Esophagus muscularis mucosa (tissue), 4 donors: ENCODE measurements at regions of chr20 and their contacts with region 1.

Region 1: GRCh38 chr20:44210422-44211176 is at the start of gene OSER1:
- DNase-seq: peak; percentile 100
- H3K4me3 ChIP-seq: peak within 1 kb of the TSS; percentile 81 to 94 (median 92)
- H3K27ac ChIP-seq: peak within 1 kb of the TSS; percentile 96 to 99 (median 98)
- H3K4me1 ChIP-seq: peaks cover 51 to 71% (median 57%) of the 10 kb centered on the region in 4 donors
- H3K27me3 ChIP-seq: no peaks in the 10 kb centered on the region
- CTCF ChIP-seq: peak in 1 of 3 experiments; percentile 16
- EP300 ChIP-seq: no peak
- POLR2A ChIP-seq: peak; percentile 93
- total RNA-seq, gene OSER1: 45.2 to 94.4 (median 71.0) TPM

Region 2: GRCh38 chr20:44056010-44056698 is 154.4 kb before region 1 on chr20:
- intact Hi-C with region 1: no loop called
- DNase-seq: peak; percentile 91
- H3K4me3 ChIP-seq: no peak overlapping the region
- H3K27ac ChIP-seq: no peak overlapping the region
- H3K4me1 ChIP-seq: no peaks in the 10 kb centered on the region
- H3K27me3 ChIP-seq: no peaks in the 10 kb centered on the region
- CTCF ChIP-seq: peak in 2 of 3 experiments; percentile 15 to 25
- EP300 ChIP-seq: no peak
- POLR2A ChIP-seq: no peak

Region 3: DNA sequence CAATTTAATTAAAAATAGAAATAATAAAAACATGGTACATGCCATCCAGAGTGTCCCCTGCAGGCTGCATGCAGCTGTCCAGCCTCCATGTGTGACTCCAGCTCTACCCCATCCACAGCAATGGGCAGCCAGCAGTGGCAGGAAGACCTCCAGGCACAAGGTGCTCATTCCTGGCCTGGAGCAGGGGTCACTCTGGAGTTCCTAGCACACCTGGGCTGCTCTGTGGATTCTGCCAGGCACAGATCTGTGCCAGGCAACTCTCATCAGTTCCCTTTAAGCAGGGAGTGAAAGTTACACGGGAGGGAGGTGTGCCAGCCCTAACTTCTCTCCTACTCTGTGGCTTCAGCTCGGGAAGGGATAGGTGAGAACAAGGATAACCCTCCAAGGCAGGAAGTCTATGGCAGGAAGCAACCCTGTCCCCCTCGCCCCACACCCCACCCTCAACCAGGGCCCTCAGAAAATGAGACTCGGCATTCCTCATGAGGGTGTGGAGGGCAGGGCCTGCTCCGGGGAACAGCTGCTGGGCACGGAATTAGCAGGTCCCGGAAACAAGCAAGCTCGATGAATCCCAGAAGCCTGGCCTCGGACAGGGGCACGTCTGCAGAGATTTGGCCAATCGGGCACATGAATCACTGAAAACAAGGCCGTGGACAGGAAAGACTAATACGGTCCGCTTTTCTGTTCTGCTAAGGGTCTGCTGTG is 33.6 kb before region 1 on chr20:
- intact Hi-C with region 1: no loop called
- DNase-seq: no peak
- H3K4me3 ChIP-seq: peak overlapping the region in 3 of 4 donors; percentile 1 to 30 (median 28)
- H3K27ac ChIP-seq: peak overlapping the region; percentile 90 to 98 (median 96)
- H3K4me1 ChIP-seq: peaks cover 58 to 96% (median 94%) of the 10 kb centered on the region in 4 donors
- H3K27me3 ChIP-seq: no peaks in the 10 kb centered on the region
- CTCF ChIP-seq: no peak
- EP300 ChIP-seq: peak; percentile 31
- POLR2A ChIP-seq: no peak

Region 4: DNA sequence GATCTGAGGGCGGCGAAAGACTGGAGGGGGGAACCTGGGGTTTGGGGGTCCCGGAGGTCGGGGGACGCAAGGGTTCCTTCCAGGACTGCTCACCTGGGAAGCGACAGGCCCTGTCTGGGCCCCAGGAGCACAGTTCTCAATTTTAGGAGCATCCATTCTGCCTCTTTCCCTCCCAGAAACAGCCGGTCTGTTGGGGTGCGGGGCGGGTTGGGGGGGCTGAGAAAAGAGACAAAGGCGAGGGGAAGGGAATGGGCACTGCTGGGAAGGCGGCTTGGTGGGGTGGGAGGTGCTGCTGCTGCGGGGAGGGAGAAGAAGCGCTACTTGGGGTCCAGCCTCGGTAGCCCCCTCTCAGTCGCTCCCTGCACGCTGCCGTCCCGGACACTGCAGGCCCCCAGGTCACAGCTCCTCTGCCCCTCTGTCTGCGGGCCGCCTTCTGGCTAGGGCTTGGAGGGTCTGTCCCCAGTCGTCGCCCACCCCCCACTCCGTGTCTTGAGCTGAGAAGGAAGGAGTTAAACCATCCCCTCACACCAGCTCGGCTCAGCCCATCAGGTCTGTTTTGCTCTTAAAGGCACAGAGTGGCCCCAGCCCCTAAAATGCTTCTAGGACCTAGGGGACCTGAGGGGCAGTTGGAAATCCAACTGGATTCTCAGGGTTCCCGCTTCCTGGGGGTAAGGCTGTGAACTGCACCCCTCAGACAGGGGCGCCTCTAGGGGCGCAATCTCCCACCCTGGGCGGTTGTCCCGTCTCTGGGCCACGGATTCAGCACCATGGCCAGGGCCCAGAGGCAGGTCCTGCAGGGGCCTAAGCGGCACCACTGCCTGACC is 37.2 kb after region 1 on chr20:
- intact Hi-C with region 1: no loop called
- DNase-seq: no peak
- H3K4me3 ChIP-seq: peak overlapping the region; percentile 42 to 51 (median 45)
- H3K27ac ChIP-seq: no peak overlapping the region
- H3K4me1 ChIP-seq: peaks cover 9 to 16% (median 15%) of the 10 kb centered on the region in 4 donors
- H3K27me3 ChIP-seq: peaks cover 0 to 37% (median 10%) of the 10 kb centered on the region in 4 donors
- CTCF ChIP-seq: no peak
- EP300 ChIP-seq: no peak
- POLR2A ChIP-seq: no peak

Region 5: GRCh38 chr20:44310664-44311639 is 100.4 kb after region 1 on chr20 and contains the start of gene FITM2:
- intact Hi-C with region 1: loop called (anchors 1 kb)
- DNase-seq: peak; percentile 99
- H3K4me3 ChIP-seq: peak within 1 kb of the TSS; percentile 75 to 97 (median 78)
- H3K27ac ChIP-seq: peak within 1 kb of the TSS; percentile 71 to 76 (median 74)
- H3K4me1 ChIP-seq: peaks cover 13 to 33% (median 23%) of the 10 kb centered on the region in 4 donors
- H3K27me3 ChIP-seq: no peaks in the 10 kb centered on the region
- CTCF ChIP-seq: peak; percentile 95 to 98 (median 98)
- EP300 ChIP-seq: no peak
- POLR2A ChIP-seq: no peak
- total RNA-seq, gene FITM2: 7.0 to 11.1 (median 8.3) TPM

Region 6: DNA sequence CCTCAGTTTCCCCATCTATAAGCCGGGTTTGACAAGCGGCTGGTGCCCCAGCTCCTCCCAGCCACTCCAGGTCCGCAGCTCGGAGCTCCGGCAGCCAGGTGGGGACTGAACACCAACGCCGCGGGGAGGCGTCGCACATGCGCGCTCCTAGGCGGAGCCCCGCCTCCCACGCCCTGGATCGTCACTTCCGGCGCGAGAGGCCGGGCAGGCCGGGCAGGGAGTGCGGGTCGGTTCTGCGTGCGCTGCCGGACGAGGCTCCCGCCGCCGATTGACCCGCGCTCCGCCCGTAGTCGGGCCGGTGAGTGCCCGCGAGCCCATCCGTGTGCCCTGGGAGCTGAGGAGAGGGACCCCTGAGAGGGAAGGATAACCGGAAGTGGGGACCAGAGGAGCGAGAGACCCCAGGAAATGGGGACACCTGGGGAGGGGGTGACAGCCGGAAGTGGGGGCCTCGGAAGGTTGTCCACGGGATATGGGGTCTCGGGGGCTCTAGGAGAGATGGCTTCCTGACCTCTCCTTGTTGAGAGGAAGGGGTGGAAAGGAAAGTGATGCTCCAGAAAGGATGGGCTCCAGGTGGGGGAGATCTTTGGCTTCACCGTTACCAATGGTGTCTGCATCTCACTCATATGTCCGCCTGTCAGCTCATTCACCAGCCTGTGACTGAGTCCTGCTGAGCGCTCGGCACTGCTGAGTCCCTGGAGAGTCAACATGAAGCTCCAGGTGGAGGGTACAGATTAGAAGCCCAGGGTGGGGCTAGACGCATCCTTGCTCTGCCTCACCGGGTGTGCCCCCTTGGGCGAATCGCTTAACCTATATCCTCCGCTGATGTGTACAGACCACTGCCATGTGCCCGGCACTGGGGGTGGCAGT is 265.3 kb after region 1 on chr20 and contains the start of gene TTPAL:
- intact Hi-C with region 1: loop called (anchors 5 kb)
- DNase-seq: peak; percentile 94
- H3K4me3 ChIP-seq: peak within 1 kb of the TSS; percentile 75 to 87 (median 78)
- H3K27ac ChIP-seq: peak within 1 kb of the TSS; percentile 92 to 96 (median 94)
- H3K4me1 ChIP-seq: peaks cover 9 to 23% (median 20%) of the 10 kb centered on the region in 4 donors
- H3K27me3 ChIP-seq: no peaks in the 10 kb centered on the region
- CTCF ChIP-seq: peak; percentile 45 to 70 (median 57)
- EP300 ChIP-seq: no peak
- POLR2A ChIP-seq: peak; percentile 98
- total RNA-seq, gene TTPAL: 9.6 to 18.2 (median 13.0) TPM

Region 7: DNA sequence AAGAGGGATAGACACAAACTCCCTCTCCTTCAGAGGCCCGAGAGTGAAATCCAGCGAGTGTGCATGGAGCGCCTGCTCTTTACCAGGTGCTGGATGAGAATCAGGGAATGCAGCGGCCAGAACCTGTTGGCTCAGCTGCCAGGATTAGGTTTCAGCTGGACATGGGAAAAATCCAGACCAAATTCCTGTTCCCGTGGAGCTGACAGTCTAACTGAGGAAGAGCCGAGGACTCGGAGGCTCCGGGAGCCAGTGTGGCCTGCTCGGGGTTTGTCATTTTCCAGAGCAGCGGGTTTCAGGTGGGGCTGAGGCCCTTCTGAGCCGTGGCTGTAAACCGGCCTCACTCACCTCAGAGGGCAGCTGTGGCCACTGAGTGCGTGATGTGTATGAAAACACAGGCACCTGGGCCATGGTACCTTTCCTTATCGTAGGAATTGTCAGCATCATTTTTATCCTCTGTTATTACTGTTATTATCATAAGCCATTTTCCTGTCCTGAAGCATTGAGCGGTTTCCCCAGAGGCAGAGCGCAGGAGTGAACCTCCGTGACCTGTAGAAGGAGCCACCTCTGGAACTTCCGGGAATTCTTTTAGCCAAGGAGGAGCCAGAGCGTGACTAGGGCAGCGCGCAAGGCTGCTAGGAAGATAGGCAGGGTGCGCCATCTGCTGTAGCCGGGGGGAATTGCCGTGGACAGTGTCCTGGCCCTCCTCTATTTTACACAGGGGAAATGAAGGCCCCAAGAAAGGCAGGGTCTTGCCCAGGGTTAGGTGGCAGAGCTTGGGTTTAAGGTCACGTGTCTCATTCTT is 399.1 kb after region 1 on chr20:
- intact Hi-C with region 1: loop called (anchors 10 kb)
- DNase-seq: peak; percentile 96
- H3K4me3 ChIP-seq: peak overlapping the region; percentile 29 to 53 (median 43)
- H3K27ac ChIP-seq: peak overlapping the region; percentile 84 to 92 (median 88)
- H3K4me1 ChIP-seq: peaks cover 40 to 61% (median 56%) of the 10 kb centered on the region in 4 donors
- H3K27me3 ChIP-seq: no peaks in the 10 kb centered on the region
- CTCF ChIP-seq: peak; percentile 98 to 100 (median 99)
- EP300 ChIP-seq: no peak
- POLR2A ChIP-seq: no peak